Naive thymus-derived CD4-positive, alpha-beta T cell (primary cell): ENCODE measurements at regions of chr1 and their contacts with region 1.

Region 1: DNA sequence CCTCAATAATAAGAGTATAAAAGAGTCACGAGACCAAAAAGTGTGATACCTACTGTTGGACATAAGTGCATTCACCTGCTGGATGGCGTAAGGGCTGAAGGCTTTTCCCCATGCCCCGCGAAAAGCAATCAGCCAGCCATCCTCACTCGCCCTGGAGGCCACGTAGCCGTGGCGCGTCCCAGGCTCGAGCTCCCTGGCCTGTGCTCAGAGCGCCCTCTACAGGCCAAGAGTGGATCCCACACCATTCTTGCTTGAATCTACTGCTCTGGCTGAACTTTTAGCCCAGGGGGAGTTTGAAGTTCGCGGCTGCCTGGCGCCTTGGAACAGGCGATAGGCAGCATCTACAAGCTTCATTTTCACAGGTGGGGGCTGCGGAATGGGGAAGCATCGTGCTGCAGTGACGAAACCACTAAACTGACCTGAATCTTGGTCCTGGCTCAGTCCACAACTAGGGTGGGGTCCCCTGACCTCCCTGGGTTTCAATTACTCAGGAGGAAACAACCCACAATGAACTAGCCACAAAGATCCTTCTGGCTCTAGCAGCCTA is 70.3 kb upstream of the SERBP1 start:
- DNase-seq: peak; percentile 67 to 89 (median 81)
- ATAC-seq: peak; percentile 100
- H3K4me3 ChIP-seq: no peak overlapping the region
- H3K4me3 Mint-ChIP-seq: peak overlapping the region in 3 of 10 donors; percentile 26 to 56 (median 37)
- H3K27ac ChIP-seq: no peak overlapping the region
- H3K27ac Mint-ChIP-seq: peak overlapping the region in 1 of 9 donors; percentile 35
- H3K4me1 ChIP-seq: no peaks in the 10 kb centered on the region
- H3K4me1 Mint-ChIP-seq: peaks cover 0 to 5% (median 4%) of the 10 kb centered on the region in 7 donors
- H3K27me3 ChIP-seq: no peaks in the 10 kb centered on the region
- H3K27me3 Mint-ChIP-seq: peaks cover 0 to 11% (median 0%) of the 10 kb centered on the region in 5 donors

Region 2: DNA sequence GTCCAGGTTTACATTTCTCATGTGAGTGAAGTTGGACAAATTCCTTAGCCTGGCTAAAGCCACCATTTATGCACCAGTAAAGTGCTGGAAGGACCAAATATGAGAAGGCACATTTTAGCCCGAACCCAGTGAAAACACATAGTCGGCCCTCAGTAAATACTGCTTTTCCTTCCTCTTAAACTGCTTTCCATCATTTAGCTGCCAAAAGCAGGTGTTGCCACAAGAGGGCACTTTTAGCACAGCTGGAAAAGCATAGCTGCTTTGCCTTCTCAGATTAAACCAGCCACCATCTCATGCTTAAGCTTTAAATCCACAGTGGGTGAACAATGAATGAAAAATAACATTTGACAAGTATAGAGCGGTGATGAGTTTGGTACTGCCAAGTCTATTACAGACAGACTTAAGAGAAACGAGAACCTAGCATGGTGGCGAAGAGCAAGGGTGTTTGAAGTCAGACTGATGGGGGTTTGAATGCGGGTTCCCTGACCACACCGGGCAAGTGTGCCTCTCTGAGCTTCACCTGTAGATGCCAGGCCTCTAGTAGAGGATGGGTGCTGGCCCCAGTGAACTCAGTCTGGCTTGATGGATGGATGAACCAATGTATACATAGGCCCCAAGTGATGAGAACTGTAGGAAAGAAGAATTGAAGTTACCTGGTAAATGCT is 504.3 kb before region 1 on chr1:
- CTCF ChIA-PET with region 1: no interaction called
- POLR2A ChIA-PET with region 1: no interaction called
- intact Hi-C with region 1: loop called (anchors 1 kb)
- DNase-seq: peak; percentile 14 to 75 (median 63)
- ATAC-seq: peak; percentile 93
- H3K4me3 ChIP-seq: no peak overlapping the region
- H3K4me3 Mint-ChIP-seq: no peak overlapping the region
- H3K27ac ChIP-seq: no peak overlapping the region
- H3K27ac Mint-ChIP-seq: peak overlapping the region in 5 of 9 donors; percentile 7 to 78 (median 74)
- H3K4me1 ChIP-seq: peaks cover 0 to 5% of the 10 kb centered on the region in 2 donors
- H3K4me1 Mint-ChIP-seq: peaks cover 4 to 24% (median 23%) of the 10 kb centered on the region in 7 donors
- H3K27me3 ChIP-seq: no peaks in the 10 kb centered on the region
- H3K27me3 Mint-ChIP-seq: no peaks in the 10 kb centered on the region

Region 3: GRCh38 chr1:67230539-67230938 is 269.9 kb before region 1 on chr1:
- CTCF ChIA-PET with region 1: interaction called, 28 read pairs
- POLR2A ChIA-PET with region 1: no interaction called
- intact Hi-C with region 1: loop called (anchors 1 kb)
- DNase-seq: no peak
- ATAC-seq: no peak
- H3K4me3 ChIP-seq: no peak overlapping the region
- H3K4me3 Mint-ChIP-seq: no peak overlapping the region
- H3K27ac ChIP-seq: no peak overlapping the region
- H3K27ac Mint-ChIP-seq: no peak overlapping the region
- H3K4me1 ChIP-seq: no peaks in the 10 kb centered on the region
- H3K4me1 Mint-ChIP-seq: peaks cover 0 to 8% (median 2%) of the 10 kb centered on the region in 7 donors
- H3K27me3 ChIP-seq: no peaks in the 10 kb centered on the region
- H3K27me3 Mint-ChIP-seq: peaks cover 0 to 7% (median 0%) of the 10 kb centered on the region in 5 donors

Region 4: GRCh38 chr1:67339623-67340343 is 160.7 kb before region 1 on chr1:
- CTCF ChIA-PET with region 1: no interaction called
- POLR2A ChIA-PET with region 1: no interaction called
- intact Hi-C with region 1: loop called in 1 of 2 experiments (anchors 2 kb)
- DNase-seq: peak in 1 of 9 donors; percentile 41
- ATAC-seq: no peak
- H3K4me3 ChIP-seq: no peak overlapping the region
- H3K4me3 Mint-ChIP-seq: peak overlapping the region in 3 of 10 donors; percentile 1 to 61 (median 35)
- H3K27ac ChIP-seq: no peak overlapping the region
- H3K27ac Mint-ChIP-seq: peak overlapping the region in 1 of 9 donors; percentile 81
- H3K4me1 ChIP-seq: peaks cover 11 to 24% of the 10 kb centered on the region in 2 donors
- H3K4me1 Mint-ChIP-seq: peaks cover 30 to 81% (median 62%) of the 10 kb centered on the region in 7 donors
- H3K27me3 ChIP-seq: no peaks in the 10 kb centered on the region
- H3K27me3 Mint-ChIP-seq: no peaks in the 10 kb centered on the region

Region 5: GRCh38 chr1:67489643-67490042 is 10.8 kb before region 1 on chr1:
- CTCF ChIA-PET with region 1: interaction called, 12 read pairs
- POLR2A ChIA-PET with region 1: no interaction called
- intact Hi-C with region 1: no loop called
- DNase-seq: peak in 2 of 9 donors; percentile 5 to 13
- ATAC-seq: no peak
- H3K4me3 ChIP-seq: no peak overlapping the region
- H3K4me3 Mint-ChIP-seq: no peak overlapping the region
- H3K27ac ChIP-seq: no peak overlapping the region
- H3K27ac Mint-ChIP-seq: no peak overlapping the region
- H3K4me1 ChIP-seq: no peaks in the 10 kb centered on the region
- H3K4me1 Mint-ChIP-seq: peaks cover 0 to under 1% (median 0%) of the 10 kb centered on the region in 7 donors
- H3K27me3 ChIP-seq: no peaks in the 10 kb centered on the region
- H3K27me3 Mint-ChIP-seq: no peaks in the 10 kb centered on the region